Pancreas (tissue), 10 donors: ENCODE measurements at regions of chr4 and their contacts with region 1.

Region 1: GRCh38 chr4:111641955-111642579 is 503.2 kb upstream of the FAM241A start:
- DNase-seq: peak in 3 of 6 donors; percentile 48 to 64 (median 57)
- ATAC-seq: peak; percentile 70 to 100 (median 96)
- H3K4me3 ChIP-seq: no peak overlapping the region
- H3K27ac ChIP-seq: no peak overlapping the region
- H3K4me1 ChIP-seq: no peaks in the 10 kb centered on the region
- H3K27me3 ChIP-seq: no peaks in the 10 kb centered on the region
- CTCF ChIP-seq: peak; percentile 46 to 68 (median 62)

Region 2: DNA sequence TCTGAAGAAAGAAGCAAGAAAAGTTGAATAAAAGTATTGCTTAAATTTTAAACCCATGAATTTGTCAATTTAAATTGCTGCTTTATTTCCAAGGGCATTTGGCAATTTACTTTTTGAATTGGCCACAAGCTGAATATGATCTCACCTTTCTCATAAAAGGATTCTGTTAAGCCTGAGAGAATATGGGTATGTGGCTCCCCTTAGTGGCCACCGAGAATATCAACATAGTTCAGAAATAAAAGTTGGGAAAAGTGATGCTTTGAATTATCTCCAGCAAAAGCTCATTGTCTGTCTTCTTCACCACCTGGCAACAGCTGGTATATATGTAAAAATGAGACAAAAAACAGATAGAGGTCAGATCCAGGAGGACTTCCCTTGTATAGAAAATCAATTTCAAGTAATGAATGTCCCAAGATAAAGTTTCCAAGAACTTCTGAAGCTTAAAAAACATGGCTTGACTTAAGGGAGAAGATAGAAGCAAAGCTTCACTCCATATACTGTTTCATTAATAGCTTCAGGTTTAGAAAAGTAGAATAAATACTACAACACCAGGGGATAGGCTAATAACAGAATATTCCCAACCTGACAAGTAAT is 212.5 kb after region 1 on chr4:
- intact Hi-C with region 1: loop called in 1 of 3 experiments (anchors 5 kb)
- DNase-seq: peak in 2 of 6 donors; percentile 8 to 29
- ATAC-seq: peak; percentile 66 to 88 (median 86)
- H3K4me3 ChIP-seq: no peak overlapping the region
- H3K27ac ChIP-seq: no peak overlapping the region
- H3K4me1 ChIP-seq: no peaks in the 10 kb centered on the region
- H3K27me3 ChIP-seq: no peaks in the 10 kb centered on the region
- CTCF ChIP-seq: peak; percentile 1 to 50 (median 38)

Region 3: DNA sequence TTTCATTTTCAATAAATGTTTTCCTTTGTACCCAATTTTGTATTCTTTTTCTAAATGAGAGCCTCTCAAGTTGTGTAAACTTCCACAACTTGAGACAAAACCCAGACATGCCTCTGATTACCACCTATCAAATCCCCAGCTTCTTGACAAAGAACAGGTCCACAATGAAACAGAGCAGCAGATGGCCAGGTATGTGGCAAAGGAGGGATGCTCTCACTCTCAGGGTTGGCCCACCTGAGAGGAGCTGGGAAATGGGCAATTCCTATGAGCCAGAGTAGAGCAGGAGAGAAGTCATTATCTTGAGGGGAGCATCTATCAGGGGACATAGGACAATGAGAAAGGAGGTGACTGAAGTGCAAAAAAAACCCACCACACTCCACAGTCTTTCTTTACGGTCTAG is 229.7 kb after region 1 on chr4:
- intact Hi-C with region 1: no loop called
- DNase-seq: no peak
- ATAC-seq: no peak
- H3K4me3 ChIP-seq: no peak overlapping the region
- H3K27ac ChIP-seq: no peak overlapping the region
- H3K4me1 ChIP-seq: no peaks in the 10 kb centered on the region
- H3K27me3 ChIP-seq: no peaks in the 10 kb centered on the region
- CTCF ChIP-seq: no peak

Region 4: DNA sequence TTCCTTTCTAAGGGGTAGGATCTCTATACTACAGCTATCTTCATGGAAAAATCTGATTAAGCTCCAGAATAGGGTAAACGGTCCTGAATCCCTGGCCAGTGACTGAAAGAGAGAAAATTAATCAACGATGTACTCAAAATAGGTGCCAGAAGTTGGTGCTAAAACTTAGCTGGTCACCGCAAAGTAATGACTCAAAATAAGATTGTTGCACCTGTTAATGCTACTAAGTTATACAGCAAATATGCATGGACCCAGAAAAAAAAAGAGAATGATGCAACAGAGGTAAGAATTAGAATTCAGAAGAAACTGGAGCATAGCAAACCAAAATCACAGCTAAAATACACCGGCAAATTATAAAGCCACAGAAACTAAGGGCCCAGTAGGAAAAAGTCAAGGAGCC is 263.4 kb after region 1 on chr4:
- intact Hi-C with region 1: no loop called
- DNase-seq: no peak
- ATAC-seq: no peak
- H3K4me3 ChIP-seq: no peak overlapping the region
- H3K27ac ChIP-seq: no peak overlapping the region
- H3K4me1 ChIP-seq: no peaks in the 10 kb centered on the region
- H3K27me3 ChIP-seq: no peaks in the 10 kb centered on the region
- CTCF ChIP-seq: no peak

Region 5: DNA sequence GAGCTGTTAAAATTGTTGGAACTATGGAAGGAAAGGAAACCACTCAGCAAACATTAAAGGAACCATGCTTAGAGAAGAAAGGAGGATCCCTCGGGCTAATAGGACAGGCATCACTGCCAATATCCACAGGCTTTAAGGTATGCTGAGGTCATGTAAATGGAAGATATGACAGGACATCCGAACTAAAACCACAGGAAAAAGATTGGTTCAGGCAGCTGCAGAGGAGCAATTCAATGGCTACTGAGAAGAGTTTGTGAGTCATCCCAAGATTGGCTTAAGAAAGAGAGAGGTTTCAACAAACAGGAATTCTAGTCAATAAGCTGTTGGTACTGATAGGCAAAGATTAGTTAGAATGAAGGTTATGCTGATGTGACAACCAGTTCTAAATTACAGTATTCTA is 396.8 kb after region 1 on chr4:
- intact Hi-C with region 1: loop called in 1 of 3 experiments (anchors 5 kb)
- DNase-seq: no peak
- ATAC-seq: no peak
- H3K4me3 ChIP-seq: no peak overlapping the region
- H3K27ac ChIP-seq: no peak overlapping the region
- H3K4me1 ChIP-seq: no peaks in the 10 kb centered on the region
- H3K27me3 ChIP-seq: no peaks in the 10 kb centered on the region
- CTCF ChIP-seq: no peak